ENCODE measurements at regions of chr11 and their contacts with region 1.

Region 1: DNA sequence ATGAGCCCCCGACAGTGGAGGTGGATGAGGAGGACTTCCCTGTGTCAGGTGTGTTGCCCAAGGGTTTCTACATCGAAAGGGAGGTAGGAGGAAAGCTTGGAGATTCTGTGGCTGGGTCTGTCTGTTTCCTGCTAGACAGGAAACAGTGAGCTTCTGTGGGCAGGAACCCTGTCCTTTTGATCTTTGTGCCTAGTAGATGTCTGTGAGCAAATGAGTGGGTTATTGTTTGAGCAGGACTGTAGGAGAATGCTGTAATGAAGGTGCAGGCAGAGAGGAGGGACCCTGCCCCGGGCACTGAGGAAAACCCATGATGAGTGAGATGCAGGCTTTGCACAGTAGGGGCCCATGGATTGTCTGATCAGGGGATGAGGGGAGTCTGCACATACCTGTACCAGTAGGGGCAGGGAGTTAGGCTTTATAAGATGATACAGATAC is 14.0 kb downstream of the USP35 start:
- DNase-seq: peak; percentile 43 to 92 (median 84)
- ATAC-seq: peak; percentile 86
- H3K4me3 ChIP-seq: peak overlapping the region; percentile 53
- H3K4me3 Mint-ChIP-seq: peak overlapping the region; percentile 79 to 91 (median 87)
- H3K27ac ChIP-seq: peak overlapping the region; percentile 91
- H3K27ac Mint-ChIP-seq: peak overlapping the region; percentile 93 to 100 (median 97)
- H3K4me1 ChIP-seq: peaks cover 19 to 36% of the 10 kb centered on the region in 2 donors
- H3K4me1 Mint-ChIP-seq: peaks cover 25 to 65% (median 55%) of the 10 kb centered on the region in 7 donors
- H3K27me3 ChIP-seq: no peaks in the 10 kb centered on the region
- H3K27me3 Mint-ChIP-seq: no peaks in the 10 kb centered on the region

Region 2: DNA sequence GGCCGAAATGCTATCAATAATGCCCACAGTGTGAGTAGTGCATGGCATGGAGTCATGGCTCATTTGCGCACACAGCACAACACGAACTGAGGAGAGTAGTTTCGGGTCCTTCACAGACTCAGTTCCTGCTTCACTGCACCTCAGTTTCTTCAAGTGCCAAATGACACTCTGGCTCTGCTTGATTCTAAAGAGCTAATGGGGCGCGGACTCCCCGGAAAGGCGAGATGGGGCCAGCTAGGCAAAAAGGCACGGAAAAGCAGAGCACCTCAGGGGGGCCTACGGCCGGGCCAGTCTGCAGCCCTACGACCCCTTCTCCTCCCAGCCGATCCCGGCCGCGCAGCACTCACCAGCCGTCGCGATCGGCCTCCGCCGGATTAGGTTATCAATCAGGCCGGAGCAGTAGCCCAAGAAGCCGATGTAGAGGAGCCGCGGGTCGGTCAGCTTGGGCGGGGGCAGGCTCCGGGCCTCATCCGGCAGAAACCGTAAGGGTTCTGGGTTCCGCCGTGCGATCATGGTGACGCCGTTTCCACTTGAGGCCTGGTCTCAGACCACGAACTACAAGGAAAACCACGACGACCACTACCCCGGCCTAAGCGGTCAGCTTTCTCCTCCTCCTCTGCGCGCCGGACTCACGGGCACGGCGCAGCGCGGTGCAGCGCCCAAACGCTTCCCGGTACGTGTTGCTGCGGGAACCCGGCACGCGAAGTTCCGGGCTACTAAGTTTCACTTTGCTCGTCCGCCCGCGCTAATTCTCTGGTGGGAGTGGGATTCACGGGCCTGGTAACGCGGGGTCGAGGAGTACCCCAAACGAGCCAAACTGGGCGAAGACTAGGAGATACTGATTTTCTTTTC is 123.3 kb before region 1 on chr11 and contains the start of gene NDUFC2:
- CTCF ChIA-PET with region 1: no interaction called
- POLR2A ChIA-PET with region 1: no interaction called
- intact Hi-C with region 1: loop called in 1 of 2 experiments (anchors 2 kb)
- DNase-seq: peak; percentile 37 to 73 (median 61)
- ATAC-seq: peak; percentile 90
- H3K4me3 ChIP-seq: peak within 1 kb of the TSS; percentile 99
- H3K4me3 Mint-ChIP-seq: peak within 1 kb of the TSS; percentile 92 to 98 (median 95)
- H3K27ac ChIP-seq: peak within 1 kb of the TSS; percentile 83
- H3K27ac Mint-ChIP-seq: peak within 1 kb of the TSS; percentile 90 to 97 (median 95)
- H3K4me1 ChIP-seq: peaks cover 38 to 43% of the 10 kb centered on the region in 2 donors
- H3K4me1 Mint-ChIP-seq: peaks cover 41 to 68% (median 53%) of the 10 kb centered on the region in 7 donors
- H3K27me3 ChIP-seq: no peaks in the 10 kb centered on the region
- H3K27me3 Mint-ChIP-seq: no peaks in the 10 kb centered on the region
- total RNA-seq, gene NDUFC2: 43.4 to 189 (median 64.7) TPM

Region 3: DNA sequence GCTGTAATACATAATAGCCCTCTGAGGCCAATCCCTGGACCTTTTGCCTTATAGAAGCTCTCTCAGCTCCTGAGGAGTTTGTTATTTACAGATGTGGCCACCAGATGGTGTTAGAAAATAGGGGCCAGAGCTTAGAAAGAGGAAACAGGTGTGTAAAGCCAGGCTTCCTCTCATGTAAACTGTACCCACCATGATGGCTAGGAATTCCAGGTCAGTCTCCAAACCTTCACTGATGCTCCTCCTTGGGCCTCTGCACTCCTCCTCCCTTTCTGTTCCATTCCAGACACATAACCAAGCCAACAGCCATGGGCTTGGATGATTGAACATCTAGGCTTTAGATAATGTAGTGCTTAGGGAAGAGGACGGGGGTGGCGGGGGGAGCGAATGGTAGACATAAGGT is 25.7 kb after region 1 on chr11:
- CTCF ChIA-PET with region 1: interaction called, 4 read pairs
- POLR2A ChIA-PET with region 1: no interaction called
- intact Hi-C with region 1: loop called (anchors 2 kb)
- DNase-seq: peak in 2 of 9 donors; percentile 18 to 21
- ATAC-seq: peak; percentile 76
- H3K4me3 ChIP-seq: no peak overlapping the region
- H3K4me3 Mint-ChIP-seq: no peak overlapping the region
- H3K27ac ChIP-seq: no peak overlapping the region
- H3K27ac Mint-ChIP-seq: peak overlapping the region in 2 of 9 donors; percentile 57 to 65
- H3K4me1 ChIP-seq: no peaks in the 10 kb centered on the region
- H3K4me1 Mint-ChIP-seq: peaks cover 6 to 61% (median 9%) of the 10 kb centered on the region in 7 donors
- H3K27me3 ChIP-seq: no peaks in the 10 kb centered on the region
- H3K27me3 Mint-ChIP-seq: no peaks in the 10 kb centered on the region

Region 4: GRCh38 chr11:78574386-78575381 is 371.9 kb after region 1 on chr11 and contains the start of gene NARS2:
- CTCF ChIA-PET with region 1: no interaction called
- POLR2A ChIA-PET with region 1: interaction called, 3 read pairs
- intact Hi-C with region 1: loop called in 1 of 2 experiments (anchors 5 kb)
- DNase-seq: peak; percentile 89 to 97 (median 96)
- ATAC-seq: peak; percentile 99
- H3K4me3 ChIP-seq: peak within 1 kb of the TSS; percentile 70
- H3K4me3 Mint-ChIP-seq: peak within 1 kb of the TSS; percentile 93 to 100 (median 98)
- H3K27ac ChIP-seq: peak within 1 kb of the TSS; percentile 96
- H3K27ac Mint-ChIP-seq: peak within 1 kb of the TSS; percentile 86 to 99 (median 98)
- H3K4me1 ChIP-seq: peaks cover 7 to 21% of the 10 kb centered on the region in 2 donors
- H3K4me1 Mint-ChIP-seq: peaks cover 24 to 63% (median 50%) of the 10 kb centered on the region in 7 donors
- H3K27me3 ChIP-seq: no peaks in the 10 kb centered on the region
- H3K27me3 Mint-ChIP-seq: peaks cover 0 to 5% (median 0%) of the 10 kb centered on the region in 5 donors
- total RNA-seq, gene NARS2: 9.3 to 21.5 (median 19.7) TPM

Measured in naive thymus-derived CD4-positive, alpha-beta T cell (primary cell).